Colonic mucosa (tissue), 4 donors: ENCODE measurements at regions of chr5 and their contacts with region 1.

Region 1: DNA sequence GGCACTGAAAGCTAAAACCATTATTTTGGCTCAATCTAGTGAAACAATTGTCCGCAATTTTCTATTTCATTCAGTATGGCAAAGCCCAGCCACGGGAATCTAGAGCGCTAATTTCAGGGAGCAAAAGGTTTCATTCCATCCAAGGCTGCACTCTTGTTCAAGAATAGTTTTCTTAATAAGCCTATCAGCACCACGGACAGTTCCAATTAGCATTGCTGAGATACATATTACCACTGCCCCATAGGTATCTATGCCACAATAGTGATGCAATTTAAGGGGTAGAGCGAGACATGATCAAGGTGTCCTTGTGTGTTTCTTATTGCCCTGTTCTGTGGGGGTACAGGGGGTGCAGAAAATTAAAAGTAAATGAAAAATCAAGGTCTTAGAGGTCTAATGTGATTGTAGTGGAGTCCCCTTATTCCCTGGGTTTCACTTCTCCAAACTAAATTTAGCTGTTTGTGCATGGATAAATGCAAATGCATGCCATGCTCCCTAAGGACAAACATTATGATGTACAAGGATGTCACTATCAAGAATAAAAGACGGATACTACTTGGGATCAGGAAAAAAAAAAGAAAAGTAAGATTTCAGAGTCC is 45.5 kb downstream of the SPOCK1 start:
- DNase-seq: no peak
- H3K4me3 ChIP-seq: no peak overlapping the region
- H3K27ac ChIP-seq: no peak overlapping the region
- H3K4me1 ChIP-seq: no peaks in the 10 kb centered on the region
- H3K27me3 ChIP-seq: no peaks in the 10 kb centered on the region
- CTCF ChIP-seq: no peak

Region 2: GRCh38 chr5:137470111-137470920 is 16.7 kb after region 1 on chr5:
- intact Hi-C with region 1: loop called (anchors 1 kb)
- DNase-seq: no peak
- H3K4me3 ChIP-seq: no peak overlapping the region
- H3K27ac ChIP-seq: no peak overlapping the region
- H3K4me1 ChIP-seq: no peaks in the 10 kb centered on the region
- H3K27me3 ChIP-seq: no peaks in the 10 kb centered on the region
- CTCF ChIP-seq: no peak

Region 3: DNA sequence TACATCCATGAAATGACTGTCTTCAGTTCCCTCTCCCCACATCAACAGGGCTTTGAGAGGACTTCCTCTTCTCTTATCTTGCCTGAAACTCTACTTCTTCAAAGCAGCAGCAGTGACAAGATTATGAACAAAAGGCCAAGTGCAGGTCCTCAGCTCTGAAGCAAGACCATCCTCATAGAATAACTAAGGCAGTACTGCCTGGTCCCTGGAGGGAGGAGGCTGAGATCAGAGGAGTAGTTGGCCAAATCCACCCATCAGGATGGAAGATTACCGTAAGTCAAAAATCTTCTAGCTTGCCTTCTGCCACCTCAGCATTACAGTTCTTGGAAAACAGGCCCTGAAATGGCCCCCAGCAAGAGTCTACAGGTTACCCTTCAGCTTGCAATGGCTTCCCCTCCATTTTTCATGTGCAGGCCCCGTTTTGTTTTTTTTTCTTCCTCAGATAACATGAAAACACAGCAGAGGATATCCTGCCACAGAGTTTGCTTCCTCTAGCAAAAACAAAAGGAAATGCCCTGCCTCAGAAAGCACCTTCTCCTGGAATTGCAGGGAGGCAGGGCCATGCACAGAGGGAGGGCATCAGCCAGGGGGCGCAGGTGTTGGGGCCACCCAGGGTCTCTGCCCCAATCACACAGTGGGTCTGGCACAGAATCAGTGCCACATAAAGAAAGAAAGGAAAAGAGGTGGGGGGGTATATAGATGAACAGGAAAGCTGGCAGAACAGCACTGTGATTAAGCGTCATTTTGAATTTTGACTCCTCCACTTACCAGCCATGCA is 242.3 kb after region 1 on chr5:
- intact Hi-C with region 1: no loop called
- DNase-seq: no peak
- H3K4me3 ChIP-seq: no peak overlapping the region
- H3K27ac ChIP-seq: no peak overlapping the region
- H3K4me1 ChIP-seq: no peaks in the 10 kb centered on the region
- H3K27me3 ChIP-seq: no peaks in the 10 kb centered on the region
- CTCF ChIP-seq: no peak